Calu3 (cell line): ENCODE measurements at regions of chr6 and their contacts with region 1.

Region 1: GRCh38 chr6:70706491-70707123 is 38.9 kb downstream of the SMAP1 start:
- DNase-seq: peak; percentile 28
- H3K4me3 Mint-ChIP-seq: no peak overlapping the region
- H3K27ac Mint-ChIP-seq: no peak overlapping the region
- H3K4me1 Mint-ChIP-seq: peaks cover 26% of the 10 kb centered on the region
- H3K27me3 Mint-ChIP-seq: no peaks in the 10 kb centered on the region
- CTCF ChIP-seq: peak; percentile 49

Region 2: GRCh38 chr6:70884074-70884983 is 177.7 kb after region 1 on chr6:
- CTCF ChIA-PET with region 1: interaction called, 9 read pairs
- intact Hi-C with region 1: loop called (anchors 1 kb)
- DNase-seq: peak; percentile 80
- H3K4me3 Mint-ChIP-seq: no peak overlapping the region
- H3K27ac Mint-ChIP-seq: no peak overlapping the region
- H3K4me1 Mint-ChIP-seq: no peaks in the 10 kb centered on the region
- H3K27me3 Mint-ChIP-seq: peaks cover 46% of the 10 kb centered on the region
- CTCF ChIP-seq: peak; percentile 97

Region 3: DNA sequence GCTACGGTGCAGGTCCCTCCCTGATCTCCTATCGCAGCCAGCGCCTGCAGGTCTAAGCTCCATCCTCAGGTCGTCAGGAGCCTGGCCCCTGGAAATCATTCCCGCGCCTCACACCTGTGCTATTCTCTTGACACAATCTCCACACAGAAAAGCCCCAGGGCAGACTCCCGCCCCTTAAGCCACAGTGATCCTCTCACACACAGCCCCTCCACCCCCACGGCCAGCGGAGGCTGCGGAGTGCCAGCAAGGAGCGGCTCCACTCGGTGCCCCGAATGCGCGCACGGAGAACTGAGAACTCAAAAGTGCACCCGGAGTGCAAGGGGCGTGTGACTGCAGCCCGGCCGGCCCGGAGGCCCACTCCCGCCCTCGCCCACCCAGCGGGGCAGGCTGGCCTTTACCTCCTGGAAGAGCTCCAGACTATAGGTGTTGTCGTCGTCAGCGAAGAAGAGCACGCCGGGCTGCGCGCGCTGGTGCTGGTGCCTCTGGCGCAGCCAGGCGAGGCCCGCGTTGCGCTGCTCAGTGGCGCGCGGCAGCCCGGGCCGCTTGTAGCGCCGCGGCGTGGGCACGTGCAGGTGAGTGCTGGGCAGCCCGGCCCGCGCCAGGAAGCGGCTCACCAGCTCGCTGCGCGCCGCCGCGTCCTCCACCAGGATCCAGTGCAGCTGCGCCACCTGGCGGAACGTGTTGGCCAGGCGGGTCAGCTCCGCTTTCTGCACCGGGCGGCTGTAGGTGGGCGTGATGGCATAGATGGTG is 249.0 kb after region 1 on chr6:
- CTCF ChIA-PET with region 1: interaction called, 8 read pairs
- intact Hi-C with region 1: loop called (anchors 2 kb)
- DNase-seq: peak; percentile 96
- H3K4me3 Mint-ChIP-seq: peak overlapping the region; percentile 99
- H3K27ac Mint-ChIP-seq: no peak overlapping the region
- H3K4me1 Mint-ChIP-seq: peaks cover 8% of the 10 kb centered on the region
- H3K27me3 Mint-ChIP-seq: peaks cover 97% of the 10 kb centered on the region
- CTCF ChIP-seq: peak; percentile 95

Region 4: GRCh38 chr6:71012866-71013469 is 306.4 kb after region 1 on chr6:
- CTCF ChIA-PET with region 1: no interaction called
- intact Hi-C with region 1: loop called (anchors 2 kb)
- DNase-seq: peak; percentile 50
- H3K4me3 Mint-ChIP-seq: no peak overlapping the region
- H3K27ac Mint-ChIP-seq: no peak overlapping the region
- H3K4me1 Mint-ChIP-seq: no peaks in the 10 kb centered on the region
- H3K27me3 Mint-ChIP-seq: peaks cover 33% of the 10 kb centered on the region
- CTCF ChIP-seq: peak; percentile 85